B cell (primary cell): ENCODE measurements at regions of chr1 and their contacts with region 1.

Region 1: DNA sequence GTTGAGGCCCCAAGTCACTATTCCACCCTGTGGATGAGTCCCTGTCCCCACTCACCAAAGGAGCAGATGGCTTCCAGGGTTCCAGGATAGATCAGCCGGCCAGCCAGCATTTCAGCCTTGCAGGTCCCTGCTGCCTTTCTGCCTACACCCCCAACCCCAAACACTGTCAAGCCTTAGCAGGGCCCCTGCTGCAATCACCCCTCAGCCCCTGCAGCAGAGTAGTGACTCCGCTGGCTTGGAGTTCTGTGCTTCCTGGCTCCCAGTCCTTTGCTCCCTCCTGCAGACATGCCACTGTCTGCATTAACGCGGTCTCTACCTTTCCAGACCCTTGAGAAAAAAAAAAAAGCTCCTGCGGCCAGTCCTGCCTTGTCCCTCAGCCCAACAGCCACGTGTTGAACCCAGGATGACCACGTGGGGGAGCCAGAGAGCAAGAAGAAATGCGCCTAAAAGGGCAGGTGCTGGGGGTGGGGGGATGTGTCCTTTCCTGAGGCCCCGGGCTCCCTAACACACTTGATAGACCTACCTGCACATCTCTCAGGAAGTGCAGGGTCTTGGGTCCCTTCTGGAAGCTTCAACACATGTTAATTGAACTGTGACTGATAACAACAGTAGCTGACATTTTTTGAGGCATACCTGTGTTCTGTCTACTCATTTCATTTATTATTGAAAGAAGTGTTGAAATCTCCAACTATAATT is 37.4 kb downstream of the RASSF5 start:
- DNase-seq: peak; percentile 84
- ATAC-seq: peak; percentile 95
- H3K4me3 ChIP-seq: no peak overlapping the region
- H3K4me3 Mint-ChIP-seq: no peak overlapping the region
- H3K27ac ChIP-seq: no peak overlapping the region
- H3K27ac Mint-ChIP-seq: no peak overlapping the region
- H3K4me1 ChIP-seq: peaks cover 0 to 6% of the 10 kb centered on the region in 2 donors
- H3K4me1 Mint-ChIP-seq: peaks cover 7% of the 10 kb centered on the region
- H3K27me3 ChIP-seq: no peaks in the 10 kb centered on the region
- H3K27me3 Mint-ChIP-seq: no peaks in the 10 kb centered on the region
- CTCF ChIP-seq: peak; percentile 92

Region 2: GRCh38 chr1:205919026-205919746 is 625.5 kb before region 1 on chr1:
- CTCF ChIA-PET with region 1: no interaction called
- POLR2A ChIA-PET with region 1: no interaction called
- intact Hi-C with region 1: no loop called
- DNase-seq: peak; percentile 80
- ATAC-seq: peak; percentile 71
- H3K4me3 ChIP-seq: no peak overlapping the region
- H3K4me3 Mint-ChIP-seq: no peak overlapping the region
- H3K27ac ChIP-seq: no peak overlapping the region
- H3K27ac Mint-ChIP-seq: no peak overlapping the region
- H3K4me1 ChIP-seq: no peaks in the 10 kb centered on the region
- H3K4me1 Mint-ChIP-seq: peaks cover 2% of the 10 kb centered on the region
- H3K27me3 ChIP-seq: no peaks in the 10 kb centered on the region
- H3K27me3 Mint-ChIP-seq: peaks cover 4% of the 10 kb centered on the region
- CTCF ChIP-seq: peak; percentile 93

Region 3: GRCh38 chr1:206430031-206430983 is 114.4 kb before region 1 on chr1:
- CTCF ChIA-PET with region 1: no interaction called
- POLR2A ChIA-PET with region 1: no interaction called
- intact Hi-C with region 1: no loop called
- DNase-seq: no peak
- ATAC-seq: no peak
- H3K4me3 ChIP-seq: no peak overlapping the region
- H3K4me3 Mint-ChIP-seq: no peak overlapping the region
- H3K27ac ChIP-seq: no peak overlapping the region
- H3K27ac Mint-ChIP-seq: no peak overlapping the region
- H3K4me1 ChIP-seq: no peaks in the 10 kb centered on the region
- H3K4me1 Mint-ChIP-seq: no peaks in the 10 kb centered on the region
- H3K27me3 ChIP-seq: no peaks in the 10 kb centered on the region
- H3K27me3 Mint-ChIP-seq: no peaks in the 10 kb centered on the region
- CTCF ChIP-seq: no peak

Region 4: DNA sequence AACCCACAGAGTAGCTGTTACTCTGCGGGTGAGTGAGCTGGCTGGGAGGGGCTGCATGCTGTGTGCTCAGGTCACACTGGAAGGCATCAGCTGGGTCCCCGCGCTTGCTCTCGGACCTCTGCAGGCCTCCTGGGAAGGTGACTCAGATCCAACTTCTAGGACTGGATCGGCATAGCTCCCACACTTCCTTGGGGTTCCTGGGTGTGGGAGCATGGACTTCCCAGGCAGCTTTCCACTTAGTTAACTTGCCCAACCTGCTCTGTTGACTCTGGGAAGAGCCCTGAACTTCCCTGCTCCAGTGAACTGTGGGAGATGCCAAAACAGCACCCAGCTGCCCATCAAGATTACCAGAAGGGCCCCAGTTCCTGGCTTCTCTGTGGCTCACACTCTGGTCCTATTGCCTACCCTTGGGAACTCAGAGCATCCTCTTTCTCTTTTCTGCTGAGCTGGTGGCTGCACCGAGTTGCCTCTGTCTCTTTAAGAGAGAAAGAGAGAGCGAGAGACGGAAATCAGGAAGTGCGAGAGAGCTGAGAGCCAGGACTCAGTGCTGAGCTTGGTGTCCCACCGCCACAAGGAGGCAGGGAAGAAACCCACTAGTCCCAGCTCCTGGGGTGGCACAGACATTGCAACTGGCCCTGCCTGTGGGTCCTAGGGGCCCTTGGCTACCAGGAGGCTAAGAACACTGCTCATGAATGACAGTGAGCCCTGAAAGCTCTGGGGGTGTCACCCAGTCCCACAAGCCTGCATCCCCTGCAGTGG is 74.6 kb before region 1 on chr1 and contains the start of gene IKBKE:
- CTCF ChIA-PET with region 1: interaction called, 18 read pairs
- POLR2A ChIA-PET with region 1: no interaction called
- intact Hi-C with region 1: no loop called
- DNase-seq: peak; percentile 77
- ATAC-seq: peak; percentile 65
- H3K4me3 ChIP-seq: peak within 1 kb of the TSS; percentile 62 to 97 (median 85)
- H3K4me3 Mint-ChIP-seq: peak within 1 kb of the TSS; percentile 88
- H3K27ac ChIP-seq: peak within 1 kb of the TSS; percentile 63 to 75
- H3K27ac Mint-ChIP-seq: peak within 1 kb of the TSS; percentile 85
- H3K4me1 ChIP-seq: peaks cover 63 to 74% of the 10 kb centered on the region in 2 donors
- H3K4me1 Mint-ChIP-seq: peaks cover 73% of the 10 kb centered on the region
- H3K27me3 ChIP-seq: no peaks in the 10 kb centered on the region
- H3K27me3 Mint-ChIP-seq: no peaks in the 10 kb centered on the region
- CTCF ChIP-seq: peak; percentile 30
- total RNA-seq, gene IKBKE: 40.5 and 40.8 TPM in 2 replicates

Region 5: DNA sequence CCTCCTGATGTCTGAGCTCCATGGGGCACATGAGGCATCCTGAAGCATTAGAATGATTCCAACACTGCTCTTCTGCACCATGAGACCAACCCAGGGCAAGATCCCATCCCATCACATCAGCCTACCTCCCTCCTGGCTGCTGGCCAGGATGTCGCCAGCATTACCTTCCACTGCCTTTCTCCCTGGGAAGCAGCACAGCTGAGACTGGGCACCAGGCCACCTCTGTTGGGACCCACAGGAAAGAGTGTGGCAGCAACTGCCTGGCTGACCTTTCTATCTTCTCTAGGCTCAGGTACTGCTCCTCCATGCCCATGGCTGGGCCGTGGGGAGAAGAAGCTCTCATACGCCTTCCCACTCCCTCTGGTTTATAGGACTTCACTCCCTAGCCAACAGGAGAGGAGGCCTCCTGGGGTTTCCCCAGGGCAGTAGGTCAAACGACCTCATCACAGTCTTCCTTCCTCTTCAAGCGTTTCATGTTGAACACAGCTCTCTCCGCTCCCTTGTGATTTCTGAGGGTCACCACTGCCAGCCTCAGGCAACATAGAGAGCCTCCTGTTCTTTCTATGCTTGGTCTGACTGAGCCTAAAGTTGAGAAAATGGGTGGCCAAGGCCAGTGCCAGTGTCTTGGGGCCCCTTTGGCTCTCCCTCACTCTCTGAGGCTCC is 48.4 kb before region 1 on chr1:
- CTCF ChIA-PET with region 1: interaction called, 32 read pairs
- POLR2A ChIA-PET with region 1: no interaction called
- intact Hi-C with region 1: loop called (anchors 2 kb)
- DNase-seq: peak; percentile 46
- ATAC-seq: peak; percentile 44
- H3K4me3 ChIP-seq: peak overlapping the region in 1 of 5 experiments; percentile 3
- H3K4me3 Mint-ChIP-seq: peak overlapping the region; percentile 68
- H3K27ac ChIP-seq: peak overlapping the region; percentile 28 to 67
- H3K27ac Mint-ChIP-seq: peak overlapping the region; percentile 83
- H3K4me1 ChIP-seq: peaks cover 32 to 37% of the 10 kb centered on the region in 2 donors
- H3K4me1 Mint-ChIP-seq: peaks cover 43% of the 10 kb centered on the region
- H3K27me3 ChIP-seq: no peaks in the 10 kb centered on the region
- H3K27me3 Mint-ChIP-seq: no peaks in the 10 kb centered on the region
- CTCF ChIP-seq: no peak

Region 6: DNA sequence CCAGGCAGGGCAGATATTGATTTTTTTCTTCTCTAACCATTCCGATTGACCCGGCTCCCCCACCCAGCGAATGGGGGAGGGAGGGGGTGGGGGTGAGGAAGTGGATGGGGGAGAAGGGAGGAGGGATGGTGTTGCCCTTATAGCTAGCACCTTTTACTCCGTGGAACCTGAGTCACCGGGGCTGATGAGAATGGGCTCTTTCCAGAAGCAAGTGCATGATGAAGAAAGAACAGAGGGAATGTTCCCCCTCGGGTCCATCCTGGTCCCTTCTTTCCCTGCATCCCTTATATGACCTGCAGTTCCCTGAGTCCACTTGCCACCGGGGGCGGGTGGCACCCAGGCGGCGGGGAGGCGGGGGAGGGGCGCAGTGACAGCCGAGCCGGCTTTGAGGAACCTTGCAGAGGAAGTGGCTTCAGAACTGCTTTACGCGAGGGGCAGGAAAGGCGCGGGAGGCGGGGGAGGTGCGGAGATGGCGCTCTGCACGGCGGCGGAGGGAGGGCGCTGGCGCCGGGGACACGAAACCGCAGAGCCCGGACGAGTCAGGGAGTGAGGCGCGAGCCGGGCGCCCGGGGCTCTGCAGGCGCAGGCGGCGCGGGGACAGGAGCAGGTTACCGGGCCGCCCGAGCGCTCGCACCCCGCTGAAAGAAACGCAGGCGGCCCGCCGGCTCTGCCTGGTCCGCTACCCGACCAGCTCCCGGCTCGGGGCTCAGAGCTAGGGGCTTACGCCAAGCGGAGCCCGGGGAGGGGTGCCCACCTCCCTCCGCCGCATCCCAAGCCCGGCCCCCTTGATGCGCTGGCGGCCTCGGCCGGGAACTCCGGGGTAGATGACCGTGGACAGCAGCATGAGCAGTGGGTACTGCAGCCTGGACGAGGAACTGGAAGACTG is 12.3 kb after region 1 on chr1:
- CTCF ChIA-PET with region 1: interaction called, 172 read pairs
- POLR2A ChIA-PET with region 1: interaction called, 3 read pairs
- intact Hi-C with region 1: loop called (anchors 1 kb)
- DNase-seq: peak; percentile 89
- ATAC-seq: peak; percentile 79
- H3K4me3 ChIP-seq: peak overlapping the region; percentile 85 to 100 (median 97)
- H3K4me3 Mint-ChIP-seq: peak overlapping the region; percentile 99
- H3K27ac ChIP-seq: peak overlapping the region; percentile 86 to 95
- H3K27ac Mint-ChIP-seq: peak overlapping the region; percentile 99
- H3K4me1 ChIP-seq: peaks cover 46 to 69% of the 10 kb centered on the region in 2 donors
- H3K4me1 Mint-ChIP-seq: peaks cover 67% of the 10 kb centered on the region
- H3K27me3 ChIP-seq: no peaks in the 10 kb centered on the region
- H3K27me3 Mint-ChIP-seq: no peaks in the 10 kb centered on the region
- CTCF ChIP-seq: no peak

Region 7: DNA sequence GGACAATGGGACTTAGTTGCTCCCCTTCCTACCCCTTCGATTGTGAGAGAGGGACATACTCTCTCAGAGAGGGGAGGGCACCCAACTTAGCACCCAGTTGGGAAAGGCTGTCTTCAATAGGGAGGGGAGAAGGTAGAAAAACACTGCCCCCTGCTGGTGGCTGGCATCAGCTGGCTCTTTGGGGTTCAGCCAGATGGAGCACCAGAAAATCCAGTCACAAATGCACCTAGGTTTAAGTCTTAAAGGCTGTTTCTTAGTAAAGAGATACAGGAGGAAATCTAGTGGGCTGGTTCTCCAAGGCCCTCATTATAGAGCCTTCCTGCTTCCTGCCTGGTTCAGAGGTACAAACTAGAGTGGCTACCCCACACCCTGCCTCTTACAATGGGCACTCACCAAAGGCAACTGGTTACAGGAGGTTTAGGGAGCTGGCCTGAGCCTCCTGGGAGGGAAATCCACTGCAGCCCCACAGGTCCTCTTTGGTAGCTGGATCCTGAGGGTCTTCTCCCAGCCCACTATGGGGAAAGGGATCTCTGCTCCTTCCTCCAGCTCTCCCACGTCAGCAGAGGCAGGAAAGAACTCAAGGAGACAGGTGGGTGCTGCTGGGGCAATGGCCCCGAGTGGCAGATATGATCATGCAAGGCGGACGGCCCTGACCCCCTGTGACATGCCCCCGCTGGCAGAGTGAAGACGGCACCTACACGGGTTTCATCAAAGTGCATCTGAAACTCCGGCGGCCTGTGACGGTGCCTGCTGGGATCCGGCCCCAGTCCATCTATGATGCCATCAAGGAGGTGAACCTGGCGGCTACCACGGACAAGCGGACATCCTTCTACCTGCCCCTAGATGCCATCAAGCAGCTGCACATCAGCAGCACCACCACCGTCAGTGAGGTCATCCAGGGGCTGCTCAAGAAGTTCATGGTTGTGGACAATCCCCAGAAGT is 39.3 kb after region 1 on chr1:
- CTCF ChIA-PET with region 1: interaction called, 1,018 read pairs
- POLR2A ChIA-PET with region 1: interaction called, 18 read pairs
- intact Hi-C with region 1: loop called (anchors 1 kb)
- DNase-seq: peak; percentile 86
- ATAC-seq: no peak
- H3K4me3 ChIP-seq: no peak overlapping the region
- H3K4me3 Mint-ChIP-seq: peak overlapping the region; percentile 70
- H3K27ac ChIP-seq: peak overlapping the region in 1 of 2 donors; percentile 96
- H3K27ac Mint-ChIP-seq: peak overlapping the region; percentile 98
- H3K4me1 ChIP-seq: peaks cover 46 to 50% of the 10 kb centered on the region in 2 donors
- H3K4me1 Mint-ChIP-seq: peaks cover 49% of the 10 kb centered on the region
- H3K27me3 ChIP-seq: no peaks in the 10 kb centered on the region
- H3K27me3 Mint-ChIP-seq: no peaks in the 10 kb centered on the region
- CTCF ChIP-seq: peak; percentile 94

Region 8: GRCh38 chr1:206658264-206658980 is 113.7 kb after region 1 on chr1:
- CTCF ChIA-PET with region 1: interaction called, 26 read pairs
- POLR2A ChIA-PET with region 1: no interaction called
- intact Hi-C with region 1: no loop called
- DNase-seq: peak; percentile 72
- ATAC-seq: peak; percentile 85
- H3K4me3 ChIP-seq: peak overlapping the region in 3 of 5 experiments; percentile 8 to 51 (median 12)
- H3K4me3 Mint-ChIP-seq: peak overlapping the region; percentile 49
- H3K27ac ChIP-seq: no peak overlapping the region
- H3K27ac Mint-ChIP-seq: peak overlapping the region; percentile 1
- H3K4me1 ChIP-seq: peaks cover 16 to 17% of the 10 kb centered on the region in 2 donors
- H3K4me1 Mint-ChIP-seq: peaks cover 21% of the 10 kb centered on the region
- H3K27me3 ChIP-seq: peaks cover 0 to 34% (median 11%) of the 10 kb centered on the region in 4 experiments
- H3K27me3 Mint-ChIP-seq: peaks cover 30% of the 10 kb centered on the region
- CTCF ChIP-seq: peak; percentile 96